ENCODE measurements at regions of chr19 and their contacts with region 1.

Region 1: GRCh38 chr19:2739602-2740313 is at the start of gene SLC39A3:
- DNase-seq: peak; percentile 98 to 99 (median 99)
- ATAC-seq: peak; percentile 100
- H3K4me3 ChIP-seq: peak within 1 kb of the TSS; percentile 80 to 93
- H3K4me3 Mint-ChIP-seq: peak within 1 kb of the TSS; percentile 86
- H3K27ac ChIP-seq: peak within 1 kb of the TSS; percentile 38 to 45
- H3K27ac Mint-ChIP-seq: no peak within 1 kb of the TSS
- H3K4me1 ChIP-seq: peaks cover 9% of the 10 kb centered on the region
- H3K4me1 Mint-ChIP-seq: peaks cover 24% of the 10 kb centered on the region
- H3K27me3 ChIP-seq: peaks cover 0 to 7% of the 10 kb centered on the region in 2 experiments
- H3K27me3 Mint-ChIP-seq: peaks cover 15% of the 10 kb centered on the region
- CTCF ChIP-seq: no peak
- total RNA-seq, gene SLC39A3: 11.7 to 12.0 TPM

Region 2: DNA sequence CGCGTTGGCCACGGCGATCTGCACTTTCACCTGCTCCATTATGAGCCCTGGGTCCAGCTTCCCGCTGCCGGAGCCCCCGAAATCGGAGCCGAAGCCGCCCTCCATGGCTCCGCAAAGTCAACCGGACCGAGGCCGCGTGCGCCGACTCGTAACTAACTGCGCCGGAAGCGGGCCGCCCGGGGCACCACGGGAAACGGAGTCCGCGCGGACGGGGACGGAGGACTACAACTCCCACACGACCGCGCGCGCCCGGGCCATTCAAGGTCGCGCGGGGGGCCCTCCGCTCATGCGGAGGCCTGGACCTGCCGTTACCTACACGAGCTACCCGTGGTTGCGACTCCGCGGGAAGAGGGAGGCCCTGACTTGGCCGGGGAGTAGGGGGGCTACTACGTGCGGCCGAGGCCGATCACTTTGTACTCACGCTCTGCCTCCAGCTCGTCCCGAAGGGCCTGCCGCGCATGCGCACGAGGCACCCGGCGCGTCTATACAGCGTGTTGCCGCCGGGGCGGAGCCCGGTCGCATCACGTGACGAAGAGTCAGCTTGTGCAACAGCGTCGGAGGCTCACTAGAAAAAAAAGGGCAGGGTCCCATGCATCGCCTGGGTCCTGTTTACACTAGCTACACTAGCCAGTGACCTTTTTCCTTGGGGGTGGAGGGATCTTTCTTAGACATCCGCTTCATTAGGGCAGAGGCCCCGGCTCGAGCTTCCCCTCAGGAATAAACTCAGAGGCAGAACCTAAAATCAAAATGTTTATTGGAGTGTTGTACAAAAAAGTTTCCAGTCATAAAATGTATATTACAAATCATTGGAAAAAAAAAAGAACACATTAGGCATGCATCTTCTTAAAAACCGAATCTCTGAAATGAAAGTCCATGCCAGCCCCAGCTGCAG is 312.1 kb before region 1 on chr19 and contains the start of gene TIMM13:
- CTCF ChIA-PET with region 1: no interaction called
- POLR2A ChIA-PET with region 1: no interaction called
- intact Hi-C with region 1: loop called in 1 of 2 experiments (anchors 1 kb)
- DNase-seq: peak; percentile 91 to 98 (median 96)
- ATAC-seq: peak; percentile 94
- H3K4me3 ChIP-seq: peak within 1 kb of the TSS; percentile 92 to 98
- H3K4me3 Mint-ChIP-seq: peak within 1 kb of the TSS; percentile 95
- H3K27ac ChIP-seq: peak within 1 kb of the TSS; percentile 96 to 99
- H3K27ac Mint-ChIP-seq: peak within 1 kb of the TSS; percentile 98
- H3K4me1 ChIP-seq: peaks cover 19% of the 10 kb centered on the region
- H3K4me1 Mint-ChIP-seq: peaks cover 13% of the 10 kb centered on the region
- H3K27me3 ChIP-seq: no peaks in the 10 kb centered on the region
- H3K27me3 Mint-ChIP-seq: no peaks in the 10 kb centered on the region
- CTCF ChIP-seq: no peak
- total RNA-seq, gene TIMM13: 21.5 to 24.4 TPM

Region 3: GRCh38 chr19:2648528-2648937 is 91.2 kb before region 1 on chr19:
- CTCF ChIA-PET with region 1: interaction called, 90 read pairs
- POLR2A ChIA-PET with region 1: no interaction called
- intact Hi-C with region 1: no loop called
- DNase-seq: peak; percentile 53 to 84 (median 76)
- ATAC-seq: peak; percentile 99
- H3K4me3 ChIP-seq: no peak overlapping the region
- H3K4me3 Mint-ChIP-seq: no peak overlapping the region
- H3K27ac ChIP-seq: no peak overlapping the region
- H3K27ac Mint-ChIP-seq: no peak overlapping the region
- H3K4me1 ChIP-seq: no peaks in the 10 kb centered on the region
- H3K4me1 Mint-ChIP-seq: peaks cover 2% of the 10 kb centered on the region
- H3K27me3 ChIP-seq: no peaks in the 10 kb centered on the region
- H3K27me3 Mint-ChIP-seq: no peaks in the 10 kb centered on the region
- CTCF ChIP-seq: peak; percentile 97

Region 4: GRCh38 chr19:2691951-2692350 is 47.8 kb before region 1 on chr19:
- CTCF ChIA-PET with region 1: no interaction called
- POLR2A ChIA-PET with region 1: no interaction called
- intact Hi-C with region 1: no loop called
- DNase-seq: no peak
- ATAC-seq: no peak
- H3K4me3 ChIP-seq: no peak overlapping the region
- H3K4me3 Mint-ChIP-seq: no peak overlapping the region
- H3K27ac ChIP-seq: no peak overlapping the region
- H3K27ac Mint-ChIP-seq: no peak overlapping the region
- H3K4me1 ChIP-seq: no peaks in the 10 kb centered on the region
- H3K4me1 Mint-ChIP-seq: no peaks in the 10 kb centered on the region
- H3K27me3 ChIP-seq: no peaks in the 10 kb centered on the region
- H3K27me3 Mint-ChIP-seq: no peaks in the 10 kb centered on the region
- CTCF ChIP-seq: no peak

Region 5: GRCh38 chr19:2702162-2703076 is 37.3 kb before region 1 on chr19 and contains the start of gene GNG7:
- CTCF ChIA-PET with region 1: no interaction called
- POLR2A ChIA-PET with region 1: no interaction called
- intact Hi-C with region 1: loop called (anchors 1 kb)
- DNase-seq: peak; percentile 89 to 97 (median 94)
- ATAC-seq: peak; percentile 100
- H3K4me3 ChIP-seq: peak within 1 kb of the TSS; percentile 38 to 50
- H3K4me3 Mint-ChIP-seq: peak within 1 kb of the TSS; percentile 79
- H3K27ac ChIP-seq: no peak within 1 kb of the TSS
- H3K27ac Mint-ChIP-seq: no peak within 1 kb of the TSS
- H3K4me1 ChIP-seq: peaks cover 26% of the 10 kb centered on the region
- H3K4me1 Mint-ChIP-seq: peaks cover 33% of the 10 kb centered on the region
- H3K27me3 ChIP-seq: no peaks in the 10 kb centered on the region
- H3K27me3 Mint-ChIP-seq: no peaks in the 10 kb centered on the region
- CTCF ChIP-seq: no peak
- total RNA-seq, gene GNG7: 2.6 to 2.9 TPM

Region 6: DNA sequence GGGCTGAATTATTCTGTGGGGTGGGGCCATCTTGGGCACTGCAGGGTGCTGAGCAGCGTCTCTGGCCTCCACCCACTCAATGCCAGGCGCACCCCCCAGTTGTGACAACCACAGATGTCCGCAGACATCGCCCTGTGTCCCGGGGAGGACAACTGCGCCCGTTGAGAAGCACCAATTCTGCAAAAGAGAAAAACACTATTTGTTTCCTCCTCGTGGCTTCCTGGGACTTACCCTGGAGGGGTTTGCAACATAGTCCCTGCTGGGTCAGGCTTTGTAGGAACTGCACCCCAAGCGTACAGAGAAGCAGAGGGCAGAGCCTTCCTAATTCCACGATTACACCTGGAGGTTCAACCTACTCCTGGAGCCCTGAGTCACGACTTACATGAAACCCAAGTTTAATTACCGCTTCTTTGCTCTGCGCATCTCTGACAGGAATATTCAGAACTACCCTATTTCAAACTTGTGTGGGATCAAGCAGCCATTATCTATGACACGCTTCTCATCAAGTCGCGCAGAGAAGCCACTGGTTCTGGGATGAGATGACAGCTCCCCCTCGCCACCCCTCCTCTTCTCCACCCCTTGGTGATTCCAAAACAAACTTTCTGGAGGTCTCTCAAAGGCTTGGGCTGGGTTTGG is 11.2 kb after region 1 on chr19:
- CTCF ChIA-PET with region 1: interaction called, 8 read pairs
- POLR2A ChIA-PET with region 1: no interaction called
- intact Hi-C with region 1: loop called in 1 of 2 experiments (anchors 1 kb)
- DNase-seq: no peak
- ATAC-seq: no peak
- H3K4me3 ChIP-seq: no peak overlapping the region
- H3K4me3 Mint-ChIP-seq: no peak overlapping the region
- H3K27ac ChIP-seq: no peak overlapping the region
- H3K27ac Mint-ChIP-seq: no peak overlapping the region
- H3K4me1 ChIP-seq: peaks cover 4% of the 10 kb centered on the region
- H3K4me1 Mint-ChIP-seq: no peaks in the 10 kb centered on the region
- H3K27me3 ChIP-seq: peaks cover 0 to 3% of the 10 kb centered on the region in 2 experiments
- H3K27me3 Mint-ChIP-seq: no peaks in the 10 kb centered on the region
- CTCF ChIP-seq: no peak